ENCODE measurements at regions of chr2 and their contacts with region 1.

Region 1: DNA sequence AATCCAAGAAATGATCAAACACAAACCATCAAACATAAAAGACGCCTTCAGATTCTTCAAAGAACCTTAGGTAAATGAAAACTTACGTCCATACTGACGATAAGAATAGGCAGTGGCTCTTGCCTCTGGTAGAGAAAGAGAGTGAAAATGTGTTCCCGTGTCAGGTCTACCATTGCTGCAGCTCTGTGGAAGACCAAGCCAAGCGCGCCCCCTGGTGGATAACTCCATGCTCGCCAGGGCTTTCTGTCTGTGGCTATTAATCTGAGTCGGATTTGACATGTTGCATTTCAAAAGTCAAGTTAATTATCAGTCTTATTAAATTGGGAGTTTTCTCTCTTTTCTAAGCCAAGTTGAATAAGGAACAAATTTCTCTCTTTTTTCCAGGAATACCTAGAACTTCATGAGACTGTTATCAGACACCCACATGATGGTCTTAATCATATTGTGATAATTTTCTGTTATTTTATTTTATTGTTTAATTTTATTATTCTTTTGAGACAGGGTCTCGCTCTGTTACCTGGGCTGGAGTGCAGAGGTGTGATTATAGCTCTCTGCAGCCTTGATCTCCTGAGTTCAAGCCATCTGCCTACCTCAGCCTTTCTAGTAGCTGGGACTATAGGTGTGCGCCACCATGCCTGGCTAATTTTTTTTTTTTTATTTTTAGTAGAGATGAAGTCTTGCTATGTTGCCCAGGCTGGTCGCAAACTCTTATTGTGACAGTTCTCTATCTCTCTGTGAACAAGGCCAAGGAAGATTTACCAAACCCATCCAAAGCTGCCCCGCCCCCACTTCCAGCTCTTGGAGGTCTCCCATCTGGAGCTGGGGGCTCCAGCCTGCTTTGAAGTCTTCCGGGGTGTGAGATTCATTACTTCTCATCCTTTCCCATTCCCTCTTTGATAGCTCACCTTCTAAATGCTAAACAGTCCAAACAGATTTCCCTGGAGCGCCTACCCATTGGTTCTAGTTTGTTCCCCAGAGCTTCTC is 15.8 kb upstream of the ZAP70 start:
- DNase-seq: peak; percentile 77 to 92 (median 81)
- ATAC-seq: peak; percentile 93
- H3K4me3 ChIP-seq: no peak overlapping the region
- H3K27ac ChIP-seq: no peak overlapping the region
- H3K4me1 ChIP-seq: peaks cover 0 to 6% of the 10 kb centered on the region in 2 experiments; a peak in 2 of 5 replicates
- H3K27me3 ChIP-seq: no peaks in the 10 kb centered on the region
- CTCF ChIP-seq: peak; percentile 94 to 99 (median 97)
- EP300 ChIP-seq: no peak
- POLR2A ChIP-seq: no peak
- RAD21 ChIP-seq: peak; percentile 100

Region 2: GRCh38 chr2:97663965-97664635 is 33.4 kb before region 1 on chr2 and contains the start of gene ACTR1B:
- CTCF ChIA-PET with region 1: interaction called, 15 read pairs
- POLR2A ChIA-PET with region 1: interaction called, 17 read pairs
- in situ Hi-C with region 1: no loop called
- intact Hi-C with region 1: loop called (anchors 1 kb)
- DNase-seq: peak; percentile 94 to 99 (median 96)
- ATAC-seq: peak; percentile 93
- H3K4me3 ChIP-seq: peak within 1 kb of the TSS; percentile 66
- H3K27ac ChIP-seq: peak within 1 kb of the TSS; percentile 98
- H3K4me1 ChIP-seq: peaks cover 21 to 43% of the 10 kb centered on the region in 2 experiments; a peak in 4 of 5 replicates
- H3K27me3 ChIP-seq: no peaks in the 10 kb centered on the region
- CTCF ChIP-seq: peak; percentile 56 to 71 (median 69)
- EP300 ChIP-seq: 0 out of 2 replicates have a peak, but pooled peaks have one; percentile 0
- POLR2A ChIP-seq: peak; percentile 92
- RAD21 ChIP-seq: peak; percentile 47 to 59
- polyA plus RNA-seq, gene ACTR1B: 0.49 to 2.3 TPM

Region 3: DNA sequence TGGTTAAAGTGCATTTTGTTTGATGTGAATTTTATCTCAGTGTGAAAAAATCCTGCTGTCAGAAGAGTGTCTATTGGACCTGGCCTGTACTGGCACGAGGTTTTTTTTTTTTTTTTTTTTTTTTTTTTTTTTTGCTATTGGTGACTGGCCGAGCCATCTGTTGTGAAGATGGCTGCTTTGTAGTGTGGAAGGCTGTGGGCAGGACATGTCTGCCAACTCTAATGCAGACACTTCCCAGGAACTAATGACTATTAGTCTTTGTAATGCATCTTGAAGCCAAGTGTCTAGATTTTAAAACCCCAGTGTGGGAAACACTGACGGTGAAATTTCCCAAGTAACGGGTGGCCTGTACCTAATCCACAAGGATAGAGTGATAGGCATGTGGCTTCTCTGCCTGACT is 50.2 kb after region 1 on chr2:
- CTCF ChIA-PET with region 1: interaction called, 17 read pairs
- POLR2A ChIA-PET with region 1: no interaction called
- in situ Hi-C with region 1: no loop called
- intact Hi-C with region 1: loop called (anchors 1 kb)
- DNase-seq: no peak
- ATAC-seq: no peak
- H3K4me3 ChIP-seq: no peak overlapping the region
- H3K27ac ChIP-seq: no peak overlapping the region
- H3K4me1 ChIP-seq: peaks cover 3 to 9% of the 10 kb centered on the region in 2 experiments; a peak in 4 of 5 replicates
- H3K27me3 ChIP-seq: no peaks in the 10 kb centered on the region
- CTCF ChIP-seq: no peak
- EP300 ChIP-seq: no peak
- POLR2A ChIP-seq: no peak
- RAD21 ChIP-seq: no peak

Region 4: GRCh38 chr2:97774425-97774824 is 76.9 kb after region 1 on chr2:
- CTCF ChIA-PET with region 1: no interaction called
- POLR2A ChIA-PET with region 1: no interaction called
- in situ Hi-C with region 1: no loop called
- intact Hi-C with region 1: no loop called
- DNase-seq: peak in 2 of 4 experiments; percentile 20 to 26
- ATAC-seq: peak; percentile 84
- H3K4me3 ChIP-seq: no peak overlapping the region
- H3K27ac ChIP-seq: no peak overlapping the region
- H3K4me1 ChIP-seq: peaks cover 0 to 3% of the 10 kb centered on the region in 2 experiments; a peak in 2 of 5 replicates
- H3K27me3 ChIP-seq: no peaks in the 10 kb centered on the region
- CTCF ChIP-seq: peak; percentile 30 to 44 (median 34); a peak in 3 of 6 replicates
- EP300 ChIP-seq: no peak
- POLR2A ChIP-seq: no peak
- RAD21 ChIP-seq: peak in 1 of 2 experiments; percentile 21; a peak in 1 of 4 replicates

Region 5: DNA sequence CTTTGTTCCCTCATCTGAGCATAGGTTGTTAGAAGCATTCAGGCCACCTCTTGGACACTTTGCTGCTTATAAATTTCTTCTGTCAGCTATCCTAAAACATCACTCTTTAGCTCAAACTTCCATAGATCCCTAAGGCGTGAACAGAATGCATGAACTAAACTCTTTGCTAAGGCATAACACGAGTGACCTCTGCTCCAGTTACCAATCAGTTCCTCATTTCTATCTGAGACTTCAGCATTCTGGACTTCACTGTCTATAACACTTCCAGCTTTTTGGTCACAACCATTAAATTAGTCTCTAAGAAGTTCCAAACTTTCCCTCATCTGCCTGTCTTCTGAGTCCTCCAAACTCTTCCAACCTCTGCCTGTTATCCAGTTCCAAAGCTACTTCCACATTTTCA is 381.2 kb after region 1 on chr2:
- CTCF ChIA-PET with region 1: no interaction called
- POLR2A ChIA-PET with region 1: no interaction called
- in situ Hi-C with region 1: no loop called
- intact Hi-C with region 1: no loop called
- DNase-seq: no peak
- ATAC-seq: no peak
- H3K4me3 ChIP-seq: no peak overlapping the region
- H3K27ac ChIP-seq: no peak overlapping the region
- H3K4me1 ChIP-seq: no peaks in the 10 kb centered on the region
- H3K27me3 ChIP-seq: peaks cover 0 to 6% of the 10 kb centered on the region in 2 experiments; a peak in 3 of 5 replicates
- CTCF ChIP-seq: no peak
- EP300 ChIP-seq: no peak
- POLR2A ChIP-seq: no peak
- RAD21 ChIP-seq: no peak

Region 6: GRCh38 chr2:98346311-98347236 is 649.0 kb after region 1 on chr2 and contains the start of gene CNGA3:
- CTCF ChIA-PET with region 1: no interaction called
- POLR2A ChIA-PET with region 1: no interaction called
- in situ Hi-C with region 1: no loop called
- intact Hi-C with region 1: no loop called
- DNase-seq: peak; percentile 12 to 46 (median 30)
- ATAC-seq: peak; percentile 70
- H3K4me3 ChIP-seq: no peak within 1 kb of the TSS
- H3K27ac ChIP-seq: no peak within 1 kb of the TSS
- H3K4me1 ChIP-seq: peaks cover 0 to 5% of the 10 kb centered on the region in 2 experiments; a peak in 2 of 5 replicates
- H3K27me3 ChIP-seq: peaks cover 6 to 26% of the 10 kb centered on the region in 2 experiments; a peak in 3 of 5 replicates
- CTCF ChIP-seq: no peak
- EP300 ChIP-seq: no peak
- POLR2A ChIP-seq: no peak
- RAD21 ChIP-seq: no peak
- polyA plus RNA-seq, gene CNGA3: not detected